ENCODE measurements at regions of chr11 and their contacts with region 1.

Region 1: GRCh38 chr11:72024069-72024754 is 25.5 kb downstream of the IL18BP start:
- DNase-seq: no peak
- H3K4me3 ChIP-seq: no peak overlapping the region
- H3K4me3 Mint-ChIP-seq: no peak overlapping the region
- H3K27ac ChIP-seq: no peak overlapping the region
- H3K27ac Mint-ChIP-seq: peak overlapping the region in 4 of 8 donors; percentile 25 to 57 (median 42)
- H3K4me1 ChIP-seq: no peaks in the 10 kb centered on the region
- H3K4me1 Mint-ChIP-seq: peaks cover 22 to 45% (median 41%) of the 10 kb centered on the region in 3 donors
- H3K27me3 ChIP-seq: no peaks in the 10 kb centered on the region
- H3K27me3 Mint-ChIP-seq: no peaks in the 10 kb centered on the region

Region 2: GRCh38 chr11:71977743-71978418 is 46.3 kb before region 1 on chr11:
- CTCF ChIA-PET with region 1: interaction called, 11 read pairs
- POLR2A ChIA-PET with region 1: no interaction called
- DNase-seq: peak; percentile 14 to 57 (median 24)
- H3K4me3 ChIP-seq: no peak overlapping the region
- H3K4me3 Mint-ChIP-seq: no peak overlapping the region
- H3K27ac ChIP-seq: no peak overlapping the region
- H3K27ac Mint-ChIP-seq: no peak overlapping the region
- H3K4me1 ChIP-seq: no peaks in the 10 kb centered on the region
- H3K4me1 Mint-ChIP-seq: peaks cover 0 to 2% (median 0%) of the 10 kb centered on the region in 3 donors
- H3K27me3 ChIP-seq: no peaks in the 10 kb centered on the region
- H3K27me3 Mint-ChIP-seq: no peaks in the 10 kb centered on the region

Region 3: GRCh38 chr11:72040726-72041441 is 16.7 kb after region 1 on chr11:
- CTCF ChIA-PET with region 1: interaction called, 38 read pairs
- POLR2A ChIA-PET with region 1: interaction called, 4 read pairs
- DNase-seq: peak; percentile 68 to 87 (median 77)
- H3K4me3 ChIP-seq: peak overlapping the region; percentile 68
- H3K4me3 Mint-ChIP-seq: no peak overlapping the region
- H3K27ac ChIP-seq: peak overlapping the region; percentile 90
- H3K27ac Mint-ChIP-seq: no peak overlapping the region
- H3K4me1 ChIP-seq: peaks cover 67% of the 10 kb centered on the region
- H3K4me1 Mint-ChIP-seq: peaks cover 11 to 32% (median 13%) of the 10 kb centered on the region in 3 donors
- H3K27me3 ChIP-seq: no peaks in the 10 kb centered on the region
- H3K27me3 Mint-ChIP-seq: no peaks in the 10 kb centered on the region

Region 4: DNA sequence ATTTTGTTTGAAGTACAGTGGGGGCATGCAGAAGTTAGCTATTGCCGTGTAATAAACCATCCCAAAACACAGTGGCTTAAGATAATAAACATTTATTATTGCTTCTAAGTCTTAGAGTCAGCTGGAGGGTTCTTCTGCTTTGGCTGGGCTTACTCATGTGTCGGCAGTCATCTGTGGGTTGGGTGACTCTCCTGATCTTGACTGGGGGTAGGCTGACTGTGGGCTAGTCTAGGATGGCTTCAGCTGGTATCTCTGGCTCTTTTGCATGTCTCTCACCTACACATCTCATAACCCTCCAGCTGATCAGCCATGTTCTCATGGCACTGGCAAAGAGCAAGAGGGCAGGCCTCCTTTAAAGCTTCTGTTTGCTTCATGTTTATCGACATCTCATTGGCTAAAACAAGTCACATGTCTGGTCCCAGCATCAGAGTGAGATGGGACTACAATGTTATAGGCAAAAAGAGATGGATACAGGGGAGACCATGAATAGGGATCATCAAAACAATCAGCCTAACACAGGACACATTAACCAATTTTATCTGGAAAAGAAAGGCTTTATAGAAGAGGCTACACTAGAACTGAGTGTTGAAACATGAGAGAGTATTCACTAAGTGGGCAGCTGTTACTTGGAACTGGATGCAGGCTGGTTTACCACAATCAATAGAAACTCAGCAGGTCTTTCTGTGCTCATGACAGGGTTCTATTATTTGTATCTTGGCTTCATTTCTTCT is 61.6 kb after region 1 on chr11:
- CTCF ChIA-PET with region 1: interaction called, 177 read pairs
- POLR2A ChIA-PET with region 1: interaction called, 3 read pairs
- DNase-seq: no peak
- H3K4me3 ChIP-seq: no peak overlapping the region
- H3K4me3 Mint-ChIP-seq: no peak overlapping the region
- H3K27ac ChIP-seq: no peak overlapping the region
- H3K27ac Mint-ChIP-seq: peak overlapping the region; percentile 36 to 83 (median 74)
- H3K4me1 ChIP-seq: peaks cover 9% of the 10 kb centered on the region
- H3K4me1 Mint-ChIP-seq: peaks cover 10 to 21% (median 17%) of the 10 kb centered on the region in 3 donors
- H3K27me3 ChIP-seq: no peaks in the 10 kb centered on the region
- H3K27me3 Mint-ChIP-seq: no peaks in the 10 kb centered on the region

Region 5: DNA sequence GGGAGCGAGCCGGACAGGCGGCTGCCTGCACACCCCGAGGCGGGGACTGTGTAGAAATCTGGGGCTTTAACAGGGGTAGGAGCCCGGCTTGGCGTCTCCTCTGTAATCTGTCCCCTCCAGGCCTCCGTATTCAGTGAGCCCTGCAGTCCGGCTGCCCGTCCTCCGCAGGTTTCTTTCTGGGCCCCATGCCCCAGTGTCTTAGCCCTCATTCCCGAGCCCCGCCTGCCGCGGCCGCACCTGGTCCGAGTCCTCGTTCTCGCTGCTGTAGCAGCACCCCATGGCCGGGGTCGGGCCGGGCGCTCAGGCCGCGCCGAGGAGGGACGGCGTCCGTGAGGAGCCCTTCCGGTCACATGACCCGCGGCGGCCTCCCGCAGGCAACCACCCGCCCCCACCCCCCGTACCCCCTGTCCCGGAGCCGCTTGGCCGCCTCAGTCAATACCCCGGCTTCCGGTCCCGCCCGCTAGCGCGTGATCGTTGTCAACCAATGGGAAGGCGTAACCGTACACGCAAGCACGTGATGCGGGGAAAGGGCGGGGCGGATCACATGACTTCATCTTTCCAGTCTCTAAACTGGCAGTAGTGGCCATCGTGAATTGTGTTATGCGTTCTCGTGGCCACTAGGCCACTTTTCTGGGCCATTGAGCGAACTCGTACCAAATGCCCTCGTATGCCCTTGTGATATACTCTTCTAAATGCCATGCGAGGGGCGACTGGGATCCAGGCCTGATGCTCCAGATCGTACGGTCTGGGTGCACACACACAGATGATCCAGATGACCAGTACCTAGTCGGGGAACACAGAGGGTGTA is 78.9 kb after region 1 on chr11 and contains the start of gene LAMTOR1:
- CTCF ChIA-PET with region 1: interaction called, 177 read pairs
- POLR2A ChIA-PET with region 1: interaction called, 3 read pairs
- DNase-seq: peak; percentile 94 to 98 (median 96)
- H3K4me3 ChIP-seq: peak within 1 kb of the TSS; percentile 89
- H3K4me3 Mint-ChIP-seq: peak within 1 kb of the TSS; percentile 82 to 98 (median 89)
- H3K27ac ChIP-seq: peak within 1 kb of the TSS; percentile 94
- H3K27ac Mint-ChIP-seq: peak within 1 kb of the TSS; percentile 73 to 98 (median 96)
- H3K4me1 ChIP-seq: peaks cover 31% of the 10 kb centered on the region
- H3K4me1 Mint-ChIP-seq: peaks cover 37 to 47% (median 43%) of the 10 kb centered on the region in 3 donors
- H3K27me3 ChIP-seq: no peaks in the 10 kb centered on the region
- H3K27me3 Mint-ChIP-seq: no peaks in the 10 kb centered on the region
- total RNA-seq, gene LAMTOR1: 77.3 to 79.2 TPM

Measured in CD8-positive, alpha-beta memory T cell (primary cell).